ENCODE measurements at regions of chr11 and their contacts with region 1.

Region 1: DNA sequence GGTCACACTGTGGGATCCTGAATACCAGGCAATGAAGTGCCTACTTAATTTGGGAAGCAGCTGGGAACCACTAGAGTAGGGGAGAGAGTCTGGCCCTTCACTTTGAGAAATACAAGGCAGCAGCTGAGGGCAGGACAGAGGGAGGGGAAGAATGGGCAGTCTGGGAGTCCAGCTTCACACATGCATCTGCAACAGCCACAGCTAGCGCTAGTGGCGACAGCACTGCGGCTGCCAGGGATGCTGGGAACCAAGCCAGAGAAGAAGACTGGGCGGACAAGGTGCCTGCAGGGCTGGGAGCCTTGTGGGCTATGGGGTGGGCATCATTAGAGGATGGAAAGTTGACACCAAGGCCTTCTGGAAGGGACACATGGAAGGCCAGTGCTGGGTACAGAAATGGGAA is 15.8 kb downstream of the SCUBE2 start:
- DNase-seq: no peak
- ATAC-seq: no peak
- H3K4me3 ChIP-seq: no peak overlapping the region
- H3K4me3 Mint-ChIP-seq: no peak overlapping the region
- H3K27ac ChIP-seq: no peak overlapping the region
- H3K27ac Mint-ChIP-seq: no peak overlapping the region
- H3K4me1 ChIP-seq: no peaks in the 10 kb centered on the region
- H3K4me1 Mint-ChIP-seq: no peaks in the 10 kb centered on the region
- H3K27me3 ChIP-seq: peaks cover 0 to 33% of the 10 kb centered on the region in 2 experiments
- H3K27me3 Mint-ChIP-seq: peaks cover 3 to 23% of the 10 kb centered on the region in 2 donors

Region 2: DNA sequence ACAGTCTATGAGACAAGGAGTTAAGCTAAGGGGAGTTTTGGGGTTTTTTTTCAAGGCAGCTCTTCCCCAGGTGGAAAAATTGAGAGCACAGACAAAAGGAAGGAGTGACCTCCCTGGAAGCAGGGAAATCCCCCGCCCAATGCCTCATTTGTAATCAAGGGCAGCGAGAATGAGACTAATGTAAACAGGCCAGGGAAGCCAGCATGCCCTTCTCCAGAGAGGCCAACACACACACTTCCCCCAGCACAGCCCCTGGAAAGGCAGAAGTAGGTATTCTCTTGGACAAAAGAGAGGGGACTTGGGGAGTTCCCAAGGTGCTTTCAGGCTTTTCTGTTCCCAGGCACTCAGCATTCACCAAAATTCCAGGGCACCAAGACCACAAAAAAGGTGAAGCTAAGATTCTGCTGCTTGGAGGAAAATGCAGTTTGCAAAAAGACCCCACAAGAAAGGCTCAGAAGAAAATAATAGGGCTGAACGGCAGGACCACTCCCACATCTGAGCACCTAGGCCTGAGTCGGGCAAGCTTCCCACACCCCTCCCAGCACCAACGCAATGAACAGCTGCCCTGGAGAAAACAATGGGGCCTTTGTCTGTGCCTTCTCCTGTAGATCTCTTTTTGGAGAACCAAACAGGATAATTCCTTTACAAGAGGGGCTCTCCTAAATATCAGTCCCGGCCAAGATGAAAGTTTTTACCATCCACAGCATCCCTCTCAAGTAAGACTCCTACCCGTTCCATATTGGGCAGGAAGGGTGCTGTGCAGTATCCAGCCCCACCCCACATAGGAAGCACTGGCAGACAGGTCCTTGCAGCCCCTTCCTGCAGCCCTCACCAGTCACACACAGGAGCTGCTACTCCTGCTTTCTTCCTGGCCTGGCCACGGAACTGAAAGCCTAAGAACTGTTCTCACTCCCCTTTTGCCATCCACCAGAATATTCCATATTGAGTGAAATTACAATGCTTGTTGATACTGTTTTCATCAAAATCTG is 235.3 kb before region 1 on chr11:
- CTCF ChIA-PET with region 1: no interaction called
- POLR2A ChIA-PET with region 1: no interaction called
- DNase-seq: no peak
- ATAC-seq: no peak
- H3K4me3 ChIP-seq: no peak overlapping the region
- H3K4me3 Mint-ChIP-seq: no peak overlapping the region
- H3K27ac ChIP-seq: no peak overlapping the region
- H3K27ac Mint-ChIP-seq: no peak overlapping the region
- H3K4me1 ChIP-seq: no peaks in the 10 kb centered on the region
- H3K4me1 Mint-ChIP-seq: no peaks in the 10 kb centered on the region
- H3K27me3 ChIP-seq: peaks cover 0 to 28% of the 10 kb centered on the region in 2 experiments
- H3K27me3 Mint-ChIP-seq: peaks cover 26 to 27% of the 10 kb centered on the region in 2 donors

Region 3: DNA sequence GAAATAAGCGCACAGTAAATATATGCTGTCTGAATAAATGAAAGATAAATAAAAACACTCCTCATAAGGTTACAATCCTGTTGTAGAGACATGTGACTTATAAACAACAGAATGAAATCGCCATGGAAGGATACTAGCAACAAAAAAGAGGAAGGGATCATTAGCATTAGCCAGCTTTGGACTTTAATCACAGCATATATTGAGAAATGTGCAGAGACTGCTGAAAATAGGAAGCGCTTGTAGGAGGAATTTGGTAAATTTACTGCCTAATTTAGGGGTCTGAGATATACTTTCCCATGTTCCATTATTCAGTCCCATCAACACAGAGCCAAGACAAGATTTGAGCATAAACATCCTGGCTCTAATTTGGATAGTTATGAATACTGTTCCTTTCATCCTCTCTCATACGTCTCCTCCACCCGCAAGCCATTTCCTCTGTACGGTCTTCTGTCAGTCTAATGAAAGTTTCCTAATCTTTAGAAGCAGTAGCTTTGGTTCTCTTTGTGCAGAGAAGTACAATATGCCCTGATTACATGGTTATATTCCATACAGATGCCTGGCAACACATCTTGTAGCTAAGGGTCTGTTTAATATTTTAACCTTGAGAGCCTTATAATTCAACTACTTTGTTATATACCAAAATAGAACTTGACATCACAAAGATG is 201.7 kb before region 1 on chr11:
- CTCF ChIA-PET with region 1: interaction called in 1 of 2 experiments, 10 read pairs
- POLR2A ChIA-PET with region 1: no interaction called
- DNase-seq: no peak
- ATAC-seq: peak in 2 of 4 experiments; percentile 45 to 49
- H3K4me3 ChIP-seq: no peak overlapping the region
- H3K4me3 Mint-ChIP-seq: no peak overlapping the region
- H3K27ac ChIP-seq: no peak overlapping the region
- H3K27ac Mint-ChIP-seq: no peak overlapping the region
- H3K4me1 ChIP-seq: peaks cover 6 to 10% of the 10 kb centered on the region in 2 experiments
- H3K4me1 Mint-ChIP-seq: peaks cover 8 to 17% (median 16%) of the 10 kb centered on the region in 3 donors
- H3K27me3 ChIP-seq: peaks cover 4 to 29% of the 10 kb centered on the region in 2 experiments
- H3K27me3 Mint-ChIP-seq: peaks cover 24 to 37% of the 10 kb centered on the region in 2 donors

Measured in T-cell (primary cell).